A549 (cell line): ENCODE measurements at regions of chrX and their contacts with region 1.

Region 1: DNA sequence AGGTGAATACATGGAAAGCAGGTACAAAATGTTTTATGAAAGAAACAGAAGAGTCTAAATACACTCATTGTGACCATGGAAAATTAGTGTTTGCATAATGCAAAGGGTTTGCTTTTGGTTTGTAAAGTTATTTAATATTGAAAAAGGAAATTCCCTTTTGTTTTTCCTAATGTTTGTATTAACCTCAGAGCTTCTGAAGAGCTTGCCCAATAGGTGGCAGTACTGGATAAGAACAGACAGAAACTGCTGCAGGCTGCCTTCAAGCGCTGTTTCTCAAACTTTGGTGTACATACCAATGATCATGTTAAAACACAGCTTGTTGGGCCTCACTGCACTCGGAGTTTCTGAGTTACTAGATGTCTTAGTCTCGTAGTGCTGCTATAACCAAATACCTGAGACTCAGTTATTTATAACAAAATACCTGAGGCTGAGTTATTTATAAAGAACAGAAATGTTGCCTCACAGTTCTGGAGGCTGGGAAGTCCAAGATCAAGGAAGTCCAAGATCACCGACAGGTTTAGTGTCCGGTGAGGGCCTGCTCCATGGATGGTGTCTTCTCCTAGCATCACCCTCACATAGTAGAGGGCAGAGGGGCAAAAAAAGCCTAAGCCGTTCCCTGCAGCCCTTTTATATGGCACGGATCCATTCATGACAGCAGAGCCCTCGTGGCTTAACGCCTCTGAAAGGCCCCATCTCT is 54.2 kb downstream of the SUPT20HL2 start:
- DNase-seq: peak; percentile 43 to 76
- ATAC-seq: peak; percentile 83 to 86; a peak in 5 of 6 replicates
- H3K4me3 ChIP-seq: no peak overlapping the region
- H3K27ac ChIP-seq: no peak overlapping the region
- H3K4me1 ChIP-seq: peaks cover 20% of the 10 kb centered on the region
- CTCF ChIP-seq: peak; percentile 67
- EP300 ChIP-seq: no peak
- POLR2A ChIP-seq: no peak
- RAD21 ChIP-seq: peak; percentile 76 to 79

Region 2: GRCh38 chrX:24014388-24015018 is 245.2 kb before region 1 on chrX:
- CTCF ChIA-PET with region 1: no interaction called
- POLR2A ChIA-PET with region 1: no interaction called
- DNase-seq: no peak
- ATAC-seq: peak in 1 of 2 experiments; percentile 47; a peak in 3 of 6 replicates
- H3K4me3 ChIP-seq: no peak overlapping the region
- H3K27ac ChIP-seq: 0 out of 6 replicates have a peak overlapping the region, but pooled peaks of 1 of the 2 experiments have one; percentile 32
- H3K4me1 ChIP-seq: peaks cover 23% of the 10 kb centered on the region; the same call in 2 of the 3 replicates
- CTCF ChIP-seq: no peak
- EP300 ChIP-seq: no peak
- POLR2A ChIP-seq: no peak
- RAD21 ChIP-seq: no peak

Region 3: DNA sequence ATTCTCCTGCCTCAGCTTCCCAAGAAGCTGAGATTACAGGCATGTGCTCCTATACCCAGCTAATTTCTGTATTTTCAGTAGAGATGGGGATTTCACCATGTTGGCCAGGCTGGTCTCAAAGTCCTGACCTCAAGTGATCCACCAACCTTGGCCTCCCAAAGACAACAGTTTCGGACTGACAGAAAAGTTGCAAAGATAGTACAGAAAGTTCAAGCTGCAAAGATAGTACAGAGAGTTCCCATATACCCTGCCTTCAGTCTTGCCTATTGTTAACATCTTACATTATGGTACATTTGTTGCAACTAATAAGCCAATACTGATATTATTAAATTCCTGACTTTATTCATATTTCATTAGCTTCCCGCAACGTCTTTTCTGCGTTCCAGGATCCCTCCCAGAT is 11.7 kb before region 1 on chrX:
- CTCF ChIA-PET with region 1: interaction called, 42 read pairs
- POLR2A ChIA-PET with region 1: no interaction called
- DNase-seq: no peak
- ATAC-seq: no peak
- H3K4me3 ChIP-seq: no peak overlapping the region
- H3K27ac ChIP-seq: no peak overlapping the region
- H3K4me1 ChIP-seq: peaks cover 33% of the 10 kb centered on the region
- CTCF ChIP-seq: no peak
- EP300 ChIP-seq: no peak
- POLR2A ChIP-seq: no peak
- RAD21 ChIP-seq: no peak

Region 4: DNA sequence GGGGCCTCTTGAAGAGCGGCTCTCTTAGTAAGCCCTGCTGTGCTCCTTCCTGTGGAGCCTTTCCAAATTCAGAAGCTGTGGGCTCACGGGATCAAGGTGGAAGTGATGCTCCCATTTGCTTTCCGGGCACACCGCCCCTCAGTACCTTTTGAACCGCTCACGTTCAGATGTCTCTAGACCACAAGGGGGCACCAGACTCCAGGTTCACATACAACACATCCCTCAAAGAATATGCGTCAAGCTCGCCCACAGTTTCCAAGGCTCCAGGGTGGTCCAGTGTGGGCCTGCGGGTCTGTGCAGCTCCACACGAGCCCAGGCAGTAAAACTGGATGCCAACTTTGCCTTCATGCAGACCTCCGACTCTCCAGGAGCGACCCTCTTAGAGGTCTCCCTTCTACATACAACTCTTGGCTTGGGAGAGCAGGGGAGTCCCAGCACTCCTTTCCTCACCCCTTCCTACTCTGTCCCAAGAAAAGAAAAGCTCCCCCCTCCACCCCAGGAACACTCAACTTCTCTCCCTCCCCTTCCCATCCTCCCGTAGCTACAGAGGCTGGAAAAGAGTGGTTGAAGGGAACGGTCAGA is 111.8 kb after region 1 on chrX:
- CTCF ChIA-PET with region 1: interaction called, 12 read pairs
- POLR2A ChIA-PET with region 1: no interaction called
- DNase-seq: peak; percentile 37 to 69
- ATAC-seq: peak; percentile 94 to 98
- H3K4me3 ChIP-seq: no peak overlapping the region
- H3K27ac ChIP-seq: no peak overlapping the region
- H3K4me1 ChIP-seq: no peaks in the 10 kb centered on the region
- CTCF ChIP-seq: peak; percentile 58
- EP300 ChIP-seq: no peak
- POLR2A ChIP-seq: no peak
- RAD21 ChIP-seq: peak; percentile 65 to 69